ENCODE measurements at regions of chr5 and their contacts with region 1.

Region 1: DNA sequence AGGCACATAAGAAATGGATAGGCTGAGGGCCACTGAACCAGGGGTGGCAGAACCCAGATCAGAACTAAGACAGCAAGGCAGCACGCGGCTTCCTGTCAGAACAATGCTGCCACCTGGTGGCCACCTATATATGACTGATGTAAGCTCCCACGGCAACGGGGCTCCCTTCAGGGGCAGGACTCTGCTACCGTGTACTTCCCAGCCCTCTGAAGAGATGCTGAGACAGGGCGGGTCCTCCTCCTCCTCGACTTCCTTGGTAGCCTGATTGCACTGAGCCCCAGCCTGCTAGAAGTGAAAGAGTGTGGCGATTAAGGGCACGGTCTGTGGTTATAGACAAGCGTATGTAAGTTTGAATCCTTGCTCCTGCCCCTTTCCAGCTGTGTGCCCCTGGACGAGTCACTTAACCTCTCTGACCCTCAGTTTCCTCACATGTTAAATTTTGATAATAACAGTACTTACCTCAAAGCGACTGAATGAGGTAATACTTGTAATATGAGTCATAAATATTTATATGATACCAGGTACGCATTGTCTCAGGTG is 13.3 kb downstream of the RPS14 start:
- DNase-seq: peak; percentile 76 to 95
- H3K4me3 ChIP-seq: no peak overlapping the region
- H3K4me1 ChIP-seq: no peaks in the 10 kb centered on the region
- H3K27me3 ChIP-seq: no peaks in the 10 kb centered on the region

Region 2: GRCh38 chr5:150129813-150130492 is 306.3 kb before region 1 on chr5:
- in situ Hi-C with region 1: loop called (anchors 10 kb)
- DNase-seq: peak; percentile 65 to 85
- H3K4me3 ChIP-seq: no peak overlapping the region
- H3K4me1 ChIP-seq: no peaks in the 10 kb centered on the region
- H3K27me3 ChIP-seq: no peaks in the 10 kb centered on the region

Region 3: DNA sequence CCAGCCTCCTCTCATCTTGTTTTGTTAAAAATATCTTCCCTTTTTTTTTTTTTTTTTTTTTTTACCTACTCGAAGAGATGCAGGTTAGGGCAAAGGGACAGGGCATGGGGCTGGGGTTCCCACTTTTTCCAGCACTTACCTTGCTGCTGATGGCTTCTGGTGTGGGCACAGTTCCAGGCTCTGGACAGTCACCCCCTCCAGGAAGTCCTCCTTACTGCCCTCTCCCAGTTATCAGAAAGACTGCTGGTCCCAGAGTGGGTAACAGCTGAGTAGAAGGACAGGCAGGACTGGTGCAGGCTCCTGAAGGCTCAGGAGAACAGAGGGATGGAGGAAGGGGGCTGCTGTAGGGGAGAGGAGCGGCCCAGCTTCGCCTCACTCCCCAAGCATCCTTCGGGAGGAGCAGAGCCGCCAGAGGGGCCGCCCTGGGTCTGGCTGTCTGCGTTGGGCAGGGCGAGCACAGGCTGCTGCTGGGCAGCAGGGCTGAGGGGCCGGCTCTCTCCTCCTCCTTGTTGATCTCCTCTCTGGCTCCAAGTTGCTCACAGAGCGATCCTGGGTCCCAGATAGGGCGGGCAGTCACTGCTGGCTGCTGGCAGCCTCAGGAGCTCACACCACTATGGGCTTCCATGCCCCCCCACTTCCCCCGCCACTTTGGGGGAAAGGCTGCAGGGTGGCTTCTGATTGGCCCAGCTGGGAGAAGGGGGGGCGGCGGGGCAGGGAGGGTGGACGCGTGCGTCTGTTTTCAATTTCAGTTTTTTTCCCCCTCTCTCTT is 280.8 kb before region 1 on chr5 and contains the start of gene PDGFRB:
- in situ Hi-C with region 1: loop called (anchors 10 kb)
- DNase-seq: peak in 1 of 2 experiments; percentile 38
- H3K4me3 ChIP-seq: no peak within 1 kb of the TSS
- H3K4me1 ChIP-seq: peaks cover 7% of the 10 kb centered on the region
- H3K27me3 ChIP-seq: no peaks in the 10 kb centered on the region

Measured in HAP-1 (cell line).